MCF 10A (cell line): ENCODE measurements at regions of chr4 and their contacts with region 1.

Region 1: GRCh38 chr4:183256756-183257385 is 63.2 kb downstream of the CLDN22 start:
- DNase-seq: peak; percentile 52
- H3K4me3 Mint-ChIP-seq: no peak overlapping the region
- H3K27ac Mint-ChIP-seq: no peak overlapping the region
- H3K4me1 Mint-ChIP-seq: no peaks in the 10 kb centered on the region
- H3K27me3 Mint-ChIP-seq: no peaks in the 10 kb centered on the region
- CTCF ChIP-seq: peak; percentile 73

Region 2: GRCh38 chr4:183118585-183118984 is 138.3 kb before region 1 on chr4:
- CTCF ChIA-PET with region 1: no interaction called
- POLR2A ChIA-PET with region 1: no interaction called
- intact Hi-C with region 1: no loop called
- DNase-seq: peak; percentile 57
- H3K4me3 Mint-ChIP-seq: peak overlapping the region; percentile 21
- H3K27ac Mint-ChIP-seq: peak overlapping the region; percentile 80
- H3K4me1 Mint-ChIP-seq: peaks cover 28% of the 10 kb centered on the region
- H3K27me3 Mint-ChIP-seq: no peaks in the 10 kb centered on the region
- CTCF ChIP-seq: no peak

Region 3: DNA sequence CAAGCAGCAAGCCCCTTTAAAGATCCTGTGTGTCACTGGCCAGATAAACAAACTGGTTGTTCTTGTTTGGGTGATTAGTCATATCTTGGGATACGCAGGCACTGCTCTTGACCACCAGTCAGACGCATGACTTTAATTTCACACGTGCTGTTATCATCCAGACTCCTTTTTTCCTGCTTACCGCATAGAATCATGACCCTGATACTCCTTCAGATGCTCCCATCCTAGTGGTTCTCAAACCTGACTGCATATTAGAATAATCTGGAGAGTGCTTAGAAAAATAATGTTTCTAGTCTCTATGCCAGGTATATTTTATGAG is 15.6 kb before region 1 on chr4:
- CTCF ChIA-PET with region 1: interaction called, 33 read pairs
- POLR2A ChIA-PET with region 1: no interaction called
- intact Hi-C with region 1: no loop called
- DNase-seq: peak; percentile 22
- H3K4me3 Mint-ChIP-seq: no peak overlapping the region
- H3K27ac Mint-ChIP-seq: no peak overlapping the region
- H3K4me1 Mint-ChIP-seq: peaks cover 8% of the 10 kb centered on the region
- H3K27me3 Mint-ChIP-seq: no peaks in the 10 kb centered on the region
- CTCF ChIP-seq: no peak

Region 4: DNA sequence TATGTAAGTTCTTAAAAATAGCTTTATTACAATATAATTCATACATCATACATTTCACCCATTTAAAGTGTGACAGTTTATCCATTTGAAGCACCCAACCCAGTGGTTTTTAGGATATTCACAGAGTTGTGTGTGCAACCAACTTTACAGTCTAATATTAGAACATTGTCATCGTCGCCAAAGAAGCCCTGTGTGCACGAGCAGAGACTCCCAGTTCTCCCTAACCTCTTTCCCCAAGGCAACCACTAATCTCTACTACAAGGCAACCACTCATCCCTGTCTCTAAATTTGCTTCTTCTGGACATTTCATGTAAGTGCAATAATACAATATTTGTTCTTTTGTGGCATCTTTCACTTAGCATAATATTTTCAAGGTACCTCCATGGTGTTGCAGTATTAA is 15.5 kb after region 1 on chr4:
- CTCF ChIA-PET with region 1: interaction called, 15 read pairs
- POLR2A ChIA-PET with region 1: no interaction called
- intact Hi-C with region 1: no loop called
- DNase-seq: no peak
- H3K4me3 Mint-ChIP-seq: no peak overlapping the region
- H3K27ac Mint-ChIP-seq: no peak overlapping the region
- H3K4me1 Mint-ChIP-seq: no peaks in the 10 kb centered on the region
- H3K27me3 Mint-ChIP-seq: no peaks in the 10 kb centered on the region
- CTCF ChIP-seq: no peak

Region 5: GRCh38 chr4:183329954-183330742 is 73.3 kb after region 1 on chr4:
- CTCF ChIA-PET with region 1: no interaction called
- POLR2A ChIA-PET with region 1: no interaction called
- intact Hi-C with region 1: no loop called
- DNase-seq: no peak
- H3K4me3 Mint-ChIP-seq: no peak overlapping the region
- H3K27ac Mint-ChIP-seq: no peak overlapping the region
- H3K4me1 Mint-ChIP-seq: peaks cover 9% of the 10 kb centered on the region
- H3K27me3 Mint-ChIP-seq: no peaks in the 10 kb centered on the region
- CTCF ChIP-seq: no peak

Region 6: DNA sequence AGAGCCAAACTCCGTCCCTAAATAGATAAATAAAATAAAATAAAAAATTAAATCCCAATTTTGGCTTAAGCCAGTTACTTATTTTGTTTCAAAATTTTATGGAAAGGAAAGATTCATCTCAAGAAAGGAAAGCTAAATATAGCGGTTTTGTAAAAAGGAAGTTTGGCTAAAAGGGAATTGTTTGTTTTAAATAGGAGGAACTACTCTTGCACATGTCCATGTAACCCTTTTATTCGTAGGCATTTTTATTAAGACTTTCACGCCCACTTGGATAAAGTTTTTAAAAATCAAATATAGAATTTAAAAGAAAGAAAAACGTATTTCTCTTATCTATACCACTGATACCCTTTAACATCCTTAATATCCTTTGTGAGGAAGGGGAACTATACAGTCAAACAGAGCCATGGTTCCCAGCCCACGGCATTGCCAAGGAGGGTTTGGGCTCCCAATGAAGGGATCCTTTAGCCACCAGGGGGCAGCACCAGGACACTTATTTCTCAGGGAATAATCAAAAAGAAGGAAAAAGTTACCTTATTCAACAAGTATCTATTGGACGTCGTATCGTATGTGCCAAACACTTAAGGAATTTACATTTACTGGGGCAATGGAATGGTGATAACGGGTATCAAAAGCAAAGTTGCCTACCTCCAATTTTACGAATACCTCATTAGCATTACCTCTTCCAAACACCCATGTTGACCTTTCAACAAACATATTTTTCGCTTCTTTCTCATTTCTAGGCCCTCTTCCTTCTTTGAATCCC is 215.3 kb after region 1 on chr4:
- CTCF ChIA-PET with region 1: no interaction called
- POLR2A ChIA-PET with region 1: no interaction called
- intact Hi-C with region 1: no loop called
- DNase-seq: peak; percentile 90
- H3K4me3 Mint-ChIP-seq: no peak overlapping the region
- H3K27ac Mint-ChIP-seq: no peak overlapping the region
- H3K4me1 Mint-ChIP-seq: peaks cover 14% of the 10 kb centered on the region
- H3K27me3 Mint-ChIP-seq: no peaks in the 10 kb centered on the region
- CTCF ChIP-seq: peak; percentile 63